Activated naive CD4-positive, alpha-beta T cell treated with anti-CD3 and anti-CD28 coated beads for 36 hours (primary cell): ENCODE measurements at regions of chr12 and their contacts with region 1.

Region 1: DNA sequence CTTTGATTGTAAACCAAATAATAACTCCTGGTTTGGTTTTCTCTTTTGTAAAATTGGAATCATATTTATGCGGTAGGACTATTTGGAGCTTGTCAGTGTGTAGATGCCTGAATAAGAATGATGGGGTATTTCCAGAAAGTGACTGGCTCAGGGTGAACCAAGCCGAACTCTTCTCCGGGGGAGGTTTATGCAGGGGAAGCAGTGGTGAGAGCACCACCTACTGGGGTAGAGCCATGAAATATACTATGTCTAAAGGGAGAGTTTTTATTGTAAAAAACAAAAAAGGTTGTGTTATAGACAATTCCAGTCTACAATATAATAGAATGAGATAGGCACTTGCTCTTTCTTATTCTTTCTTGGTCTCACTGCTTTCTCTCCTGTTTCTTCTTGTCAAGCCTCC is 222.9 kb upstream of the SLC16A7 start:
- DNase-seq: no peak
- H3K4me3 Mint-ChIP-seq: no peak overlapping the region
- H3K27ac Mint-ChIP-seq: no peak overlapping the region
- H3K4me1 Mint-ChIP-seq: no peaks in the 10 kb centered on the region
- H3K27me3 Mint-ChIP-seq: peaks cover 8% of the 10 kb centered on the region

Region 2: GRCh38 chr12:59113831-59114615 is 258.9 kb before region 1 on chr12:
- CTCF ChIA-PET with region 1: no interaction called
- intact Hi-C with region 1: loop called (anchors 10 kb)
- DNase-seq: peak; percentile 81
- H3K4me3 Mint-ChIP-seq: no peak overlapping the region
- H3K27ac Mint-ChIP-seq: no peak overlapping the region
- H3K4me1 Mint-ChIP-seq: no peaks in the 10 kb centered on the region
- H3K27me3 Mint-ChIP-seq: no peaks in the 10 kb centered on the region

Region 3: GRCh38 chr12:59314209-59314608 is 58.7 kb before region 1 on chr12:
- CTCF ChIA-PET with region 1: no interaction called
- intact Hi-C with region 1: no loop called
- DNase-seq: no peak
- H3K4me3 Mint-ChIP-seq: no peak overlapping the region
- H3K27ac Mint-ChIP-seq: no peak overlapping the region
- H3K4me1 Mint-ChIP-seq: no peaks in the 10 kb centered on the region
- H3K27me3 Mint-ChIP-seq: no peaks in the 10 kb centered on the region